Vagina (tissue), 2 donors: ENCODE measurements at regions of chrX and their contacts with region 1.

Region 1: DNA sequence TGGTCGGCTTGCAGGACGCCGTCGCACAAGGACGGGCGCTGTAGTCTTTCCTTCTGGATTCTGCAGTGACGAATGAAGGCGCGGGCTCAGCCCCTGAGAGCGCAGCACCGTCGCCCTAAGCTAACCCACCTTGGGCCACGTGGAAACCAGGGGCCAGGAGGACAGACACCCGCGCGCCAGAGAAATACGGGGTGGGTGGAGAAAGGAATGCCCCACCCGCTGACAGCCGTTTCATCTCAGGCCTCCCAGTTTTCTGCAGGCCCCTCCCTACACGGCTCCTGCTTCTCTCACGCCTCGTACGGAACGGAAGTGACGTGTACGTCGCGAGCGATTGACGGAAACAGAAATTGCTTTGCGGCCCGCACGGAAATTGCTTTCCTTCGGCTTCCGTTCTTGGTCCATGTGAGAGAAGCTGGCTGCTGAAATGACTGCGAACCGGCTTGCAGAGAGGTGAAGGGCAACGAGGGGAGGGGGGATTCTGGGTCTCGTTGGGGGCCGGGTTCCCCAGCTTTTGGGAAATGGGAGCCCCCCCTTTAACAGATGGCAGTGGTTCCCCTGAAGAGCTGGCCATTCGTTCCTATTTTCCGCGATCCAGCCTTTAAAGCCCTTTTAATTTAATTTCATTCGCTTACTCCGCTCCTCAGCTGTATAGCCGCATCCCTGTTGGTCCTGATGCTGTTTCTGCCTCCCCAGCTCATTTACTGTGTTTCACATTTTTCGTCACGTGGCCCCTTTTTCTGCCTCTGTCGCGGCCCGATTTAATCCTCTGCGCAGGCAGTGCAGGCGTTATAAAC is at the start of gene UTP14A:
- DNase-seq: peak in 1 of 2 donors; percentile 91
- H3K4me3 ChIP-seq: peak within 1 kb of the TSS; percentile 40 to 63
- H3K27ac ChIP-seq: peak within 1 kb of the TSS; percentile 73
- H3K4me1 ChIP-seq: peaks cover 5% of the 10 kb centered on the region
- H3K27me3 ChIP-seq: no peaks in the 10 kb centered on the region
- CTCF ChIP-seq: no peak
- POLR2A ChIP-seq: no peak
- total RNA-seq, gene UTP14A: 9.8 TPM

Region 2: DNA sequence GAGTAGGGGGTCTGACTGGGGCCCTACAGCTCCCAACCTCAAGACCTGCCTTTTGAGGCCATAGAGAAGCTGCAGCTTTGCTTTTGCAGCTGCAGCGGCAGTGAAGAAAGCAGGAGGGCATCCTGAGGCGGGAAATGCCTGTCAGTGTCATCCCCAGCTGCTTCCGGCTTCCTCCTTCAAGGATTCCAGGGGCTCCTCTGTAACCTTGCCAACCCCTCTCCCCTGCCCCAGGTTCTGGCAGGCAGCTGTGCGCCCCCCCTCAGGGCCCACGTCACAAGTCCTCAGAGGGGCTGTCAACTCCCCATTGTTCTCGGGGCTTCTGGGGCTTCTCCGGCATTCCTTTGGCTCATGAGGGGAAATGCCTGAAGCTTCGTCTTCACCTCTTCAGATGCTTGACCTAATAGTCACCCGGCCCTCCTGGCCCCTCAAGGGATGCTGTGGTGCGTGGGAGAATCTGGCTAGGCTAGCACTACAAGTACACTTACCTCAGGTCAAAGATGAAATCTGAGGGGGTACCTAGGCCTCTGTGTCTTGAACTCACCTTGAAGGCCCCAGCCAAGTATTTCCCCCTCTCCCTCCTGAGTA is 283.1 kb before region 1 on chrX:
- intact Hi-C with region 1: loop called (anchors 10 kb)
- DNase-seq: no peak
- H3K4me3 ChIP-seq: no peak overlapping the region
- H3K27ac ChIP-seq: no peak overlapping the region
- H3K4me1 ChIP-seq: no peaks in the 10 kb centered on the region
- H3K27me3 ChIP-seq: no peaks in the 10 kb centered on the region
- CTCF ChIP-seq: no peak
- POLR2A ChIP-seq: no peak